K562 (cell line): ENCODE measurements at regions of chr14 and their contacts with region 1.

Region 1: DNA sequence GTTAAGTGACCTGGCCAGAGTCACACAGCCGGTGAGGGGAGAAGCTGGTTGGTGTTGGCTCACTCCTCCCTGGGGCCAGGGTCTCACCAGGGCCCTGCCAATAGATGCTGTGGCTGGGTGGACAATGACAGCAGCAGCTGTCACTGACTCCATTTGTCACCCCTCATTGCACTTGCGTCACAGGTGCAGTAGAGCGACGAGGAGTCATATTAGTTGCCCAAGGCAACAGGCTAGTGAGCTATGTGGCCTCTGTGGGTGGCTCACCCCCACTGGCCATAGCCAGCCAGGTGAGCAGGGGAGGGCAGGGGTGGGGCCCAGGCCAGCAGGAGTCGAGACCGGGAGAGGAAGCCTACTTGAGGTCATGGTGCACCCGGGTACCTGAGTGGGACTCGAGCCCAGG is 9.7 kb downstream of the SLC25A47 start:
- DNase-seq: no peak
- ATAC-seq: peak; percentile 50
- H3K4me3 ChIP-seq: no peak overlapping the region
- H3K27ac ChIP-seq: no peak overlapping the region
- H3K4me1 ChIP-seq: peaks cover 0 to 28% of the 10 kb centered on the region in 2 experiments; a peak in 2 of 5 replicates
- H3K27me3 ChIP-seq: no peaks in the 10 kb centered on the region
- CTCF ChIP-seq: no peak
- EP300 ChIP-seq: no peak
- POLR2A ChIP-seq: no peak; the same call in 1 of the 2 replicates
- RAD21 ChIP-seq: no peak

Region 2: DNA sequence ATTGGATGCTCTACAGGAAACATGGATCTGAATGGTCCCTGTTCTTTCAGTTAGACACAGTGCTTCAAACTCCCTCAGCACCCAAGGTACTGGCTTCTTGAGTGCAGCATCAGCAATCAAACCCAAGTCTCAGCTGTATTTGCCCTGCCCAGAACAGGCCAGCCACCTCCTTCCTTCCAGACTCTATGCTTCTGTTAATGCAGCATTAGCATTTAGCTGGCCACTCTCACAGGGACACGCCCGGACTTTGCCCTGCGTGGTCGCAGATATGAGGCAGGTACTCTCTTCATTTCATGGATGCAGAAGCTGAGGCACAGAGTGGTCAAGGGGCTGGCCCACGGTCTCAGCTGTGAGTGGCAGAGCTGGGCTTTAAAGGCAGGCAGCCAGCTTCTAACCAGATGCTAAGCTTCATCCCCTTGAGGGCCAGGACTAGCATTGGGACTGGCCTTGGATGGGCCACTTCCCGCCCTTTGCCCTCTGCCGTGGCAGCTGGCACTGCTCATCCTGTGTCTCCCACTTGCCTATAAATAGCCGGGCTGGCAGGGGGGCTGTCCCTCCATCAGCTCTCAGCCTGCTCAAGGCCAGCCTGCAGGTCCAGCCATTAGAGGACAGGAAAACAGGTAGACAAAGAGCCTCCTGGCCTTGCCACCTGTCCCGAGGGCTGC is 11.2 kb before region 1 on chr14:
- CTCF ChIA-PET with region 1: no interaction called
- POLR2A ChIA-PET with region 1: interaction called, 29 read pairs
- in situ Hi-C with region 1: no loop called
- intact Hi-C with region 1: no loop called
- DNase-seq: no peak
- ATAC-seq: no peak
- H3K4me3 ChIP-seq: no peak overlapping the region
- H3K27ac ChIP-seq: no peak overlapping the region
- H3K4me1 ChIP-seq: peaks cover 6 to 28% of the 10 kb centered on the region in 2 experiments; a peak in 3 of 5 replicates
- H3K27me3 ChIP-seq: peaks cover 0 to 8% of the 10 kb centered on the region in 2 experiments; a peak in 2 of 5 replicates
- CTCF ChIP-seq: no peak
- EP300 ChIP-seq: no peak
- POLR2A ChIP-seq: no peak
- RAD21 ChIP-seq: no peak